ENCODE measurements at regions of chr3 and their contacts with region 1.

Region 1: DNA sequence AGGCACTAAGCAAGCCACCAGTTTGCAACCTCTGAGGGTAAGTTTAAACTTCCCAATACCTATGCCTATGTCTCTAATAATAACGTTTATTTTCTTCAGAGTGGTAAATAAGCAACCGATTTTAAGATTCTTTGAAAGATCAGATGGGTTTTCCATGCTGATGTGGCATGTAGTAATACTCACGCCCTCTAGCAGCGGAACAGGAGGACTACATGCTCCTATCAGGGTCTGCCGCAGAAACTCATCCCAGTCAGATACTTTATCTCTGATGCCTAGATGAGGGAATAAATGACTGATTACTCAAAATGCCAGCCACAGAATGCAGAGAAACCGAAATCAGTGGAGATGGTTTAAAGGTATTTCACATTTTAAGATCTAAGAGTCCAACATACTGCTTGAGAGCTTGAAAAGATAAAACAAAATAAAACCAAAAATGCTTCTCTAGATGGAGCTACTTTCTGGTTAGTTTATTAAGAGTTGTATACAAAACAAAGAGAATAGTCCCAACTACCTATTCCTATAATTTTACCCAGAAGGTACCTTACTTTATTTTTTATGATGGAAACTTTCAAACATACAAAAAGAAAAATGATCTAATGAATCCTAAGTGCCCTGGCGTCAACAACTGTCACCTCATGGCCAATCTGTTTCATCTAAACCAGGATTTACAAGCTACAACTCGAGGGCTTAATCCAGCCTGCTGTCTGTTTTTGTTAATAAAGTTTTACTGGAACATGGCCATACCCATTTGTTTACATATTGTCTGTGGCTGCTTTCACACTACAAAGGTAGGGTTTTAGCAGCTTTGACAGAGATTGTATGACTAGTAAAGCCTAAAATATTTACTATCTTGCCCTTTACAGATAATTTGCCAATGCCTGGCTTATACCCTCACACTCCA is 37.5 kb upstream of the STIMATE start:
- DNase-seq: no peak
- H3K4me3 ChIP-seq: no peak overlapping the region
- H3K27ac ChIP-seq: no peak overlapping the region
- H3K4me1 ChIP-seq: no peaks in the 10 kb centered on the region
- H3K27me3 ChIP-seq: no peaks in the 10 kb centered on the region
- CTCF ChIP-seq: peak in 2 of 3 experiments; percentile 31 to 68
- POLR2A ChIP-seq: no peak

Region 2: DNA sequence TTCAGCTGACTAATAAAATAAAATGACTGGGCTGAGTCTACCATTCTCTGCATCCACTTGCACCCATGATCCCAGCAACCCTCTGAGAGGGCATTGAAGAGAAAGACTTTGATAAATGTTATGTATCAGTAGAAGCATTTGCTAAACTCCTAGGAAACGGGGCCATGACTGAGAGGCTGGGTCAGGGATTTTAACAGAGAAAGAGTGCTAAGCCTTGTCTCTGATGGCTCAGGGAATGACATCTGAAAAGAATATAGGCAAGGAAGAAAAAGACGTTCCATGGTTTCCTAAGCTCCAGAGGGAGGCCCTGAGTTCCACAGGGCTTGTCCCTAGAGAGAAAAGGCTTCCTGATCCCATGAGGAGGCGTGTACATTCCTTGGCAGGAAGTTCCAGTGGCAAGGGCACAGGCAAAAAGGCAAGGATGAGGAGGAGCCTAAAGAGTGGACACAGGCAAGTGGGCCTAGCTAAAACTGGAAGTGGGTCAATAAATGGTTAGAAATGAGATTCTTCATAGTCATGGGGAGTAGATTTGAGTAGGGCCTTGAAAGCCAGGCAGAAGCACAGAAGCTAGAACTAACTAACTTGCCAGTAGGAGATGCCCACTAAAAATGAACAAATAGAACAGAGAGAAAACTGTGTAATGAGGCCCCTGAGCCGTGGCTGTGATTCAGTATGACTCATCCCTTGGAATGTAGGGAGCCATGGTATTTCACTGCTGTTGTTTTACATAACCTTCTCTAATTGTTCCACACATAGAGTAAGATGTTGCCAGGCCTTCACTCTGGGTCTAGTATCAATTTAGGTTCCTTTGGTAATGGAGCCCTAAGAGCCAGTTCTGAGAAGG is 1594.6 kb before region 1 on chr3:
- intact Hi-C with region 1: no loop called
- DNase-seq: peak; percentile 61 to 70
- H3K4me3 ChIP-seq: no peak overlapping the region
- H3K27ac ChIP-seq: peak overlapping the region; percentile 2
- H3K4me1 ChIP-seq: peaks cover 14% of the 10 kb centered on the region
- H3K27me3 ChIP-seq: no peaks in the 10 kb centered on the region
- CTCF ChIP-seq: no peak
- POLR2A ChIP-seq: no peak

Region 3: DNA sequence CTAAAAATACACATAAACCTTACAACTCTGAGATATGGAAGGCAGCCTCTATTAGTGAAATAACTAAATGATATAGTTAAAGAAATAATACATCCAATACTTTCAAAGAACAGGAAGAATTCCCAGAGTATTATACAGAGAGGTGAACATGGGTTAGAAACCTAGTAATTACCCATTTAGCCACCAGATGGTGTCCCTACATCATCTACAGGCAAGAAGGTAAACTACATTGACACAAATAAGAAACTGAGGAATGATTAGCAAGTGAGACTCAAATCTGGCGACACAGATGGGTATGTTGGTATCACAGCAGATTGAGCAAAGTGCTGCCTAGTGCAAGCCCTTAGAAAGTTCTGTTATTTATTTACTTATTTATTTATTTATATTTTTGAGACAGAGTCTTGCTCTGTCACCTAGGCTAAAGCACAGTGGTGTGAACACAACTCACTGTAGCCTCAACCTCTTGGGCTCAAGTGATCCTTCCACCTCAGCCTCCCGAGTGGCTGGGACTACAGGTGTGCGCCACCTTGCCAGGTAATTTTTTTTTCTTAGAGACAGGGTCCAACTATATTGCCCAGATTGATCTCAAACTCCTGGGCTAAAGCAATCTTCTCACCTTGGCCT is 192.3 kb before region 1 on chr3:
- intact Hi-C with region 1: loop called (anchors 10 kb)
- DNase-seq: no peak
- H3K4me3 ChIP-seq: no peak overlapping the region
- H3K27ac ChIP-seq: no peak overlapping the region
- H3K4me1 ChIP-seq: no peaks in the 10 kb centered on the region
- H3K27me3 ChIP-seq: no peaks in the 10 kb centered on the region
- CTCF ChIP-seq: peak in 2 of 3 experiments; percentile 23 to 37
- POLR2A ChIP-seq: no peak

Measured in vagina (tissue), 2 donors.